ENCODE measurements at regions of chr1 and their contacts with region 1.

Region 1: GRCh38 chr1:112390775-112391602 is 5.0 kb upstream of the CTTNBP2NL start:
- DNase-seq: peak; percentile 76 to 97 (median 88)

Region 2: DNA sequence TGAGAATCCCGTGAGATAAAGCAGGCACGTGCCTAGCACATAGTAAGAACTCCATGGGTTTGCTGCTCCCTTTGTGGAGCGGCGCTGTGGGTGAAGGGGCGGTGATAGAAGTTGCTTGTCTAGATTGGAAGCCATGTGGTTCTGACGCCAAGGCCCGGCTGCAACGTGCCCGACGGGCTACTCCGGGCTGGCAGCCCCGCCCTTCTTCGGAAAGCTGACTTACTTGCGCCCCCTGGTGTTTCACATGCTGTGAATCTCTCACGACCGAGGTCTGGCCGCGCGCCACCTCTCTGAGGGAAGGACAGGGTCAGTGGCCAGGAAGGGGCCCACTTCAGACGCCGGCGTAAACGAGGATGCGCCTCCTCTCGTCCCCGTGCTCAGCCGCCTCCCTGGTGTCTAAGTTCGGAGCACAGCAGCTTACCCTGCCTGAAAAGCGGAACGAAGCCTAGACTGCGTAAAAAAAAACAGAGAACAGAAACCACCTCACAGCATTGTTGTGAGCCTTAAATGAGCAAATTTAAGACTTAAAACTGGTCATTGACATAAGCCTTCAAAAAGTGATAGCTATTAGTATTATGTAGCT is 75.2 kb after region 1 on chr1:
- intact Hi-C with region 1: loop called (anchors 1 kb)
- DNase-seq: peak; percentile 88 to 99 (median 96)

Region 3: GRCh38 chr1:112666946-112667345 is 276.0 kb after region 1 on chr1:
- intact Hi-C with region 1: no loop called
- DNase-seq: no peak

Region 4: DNA sequence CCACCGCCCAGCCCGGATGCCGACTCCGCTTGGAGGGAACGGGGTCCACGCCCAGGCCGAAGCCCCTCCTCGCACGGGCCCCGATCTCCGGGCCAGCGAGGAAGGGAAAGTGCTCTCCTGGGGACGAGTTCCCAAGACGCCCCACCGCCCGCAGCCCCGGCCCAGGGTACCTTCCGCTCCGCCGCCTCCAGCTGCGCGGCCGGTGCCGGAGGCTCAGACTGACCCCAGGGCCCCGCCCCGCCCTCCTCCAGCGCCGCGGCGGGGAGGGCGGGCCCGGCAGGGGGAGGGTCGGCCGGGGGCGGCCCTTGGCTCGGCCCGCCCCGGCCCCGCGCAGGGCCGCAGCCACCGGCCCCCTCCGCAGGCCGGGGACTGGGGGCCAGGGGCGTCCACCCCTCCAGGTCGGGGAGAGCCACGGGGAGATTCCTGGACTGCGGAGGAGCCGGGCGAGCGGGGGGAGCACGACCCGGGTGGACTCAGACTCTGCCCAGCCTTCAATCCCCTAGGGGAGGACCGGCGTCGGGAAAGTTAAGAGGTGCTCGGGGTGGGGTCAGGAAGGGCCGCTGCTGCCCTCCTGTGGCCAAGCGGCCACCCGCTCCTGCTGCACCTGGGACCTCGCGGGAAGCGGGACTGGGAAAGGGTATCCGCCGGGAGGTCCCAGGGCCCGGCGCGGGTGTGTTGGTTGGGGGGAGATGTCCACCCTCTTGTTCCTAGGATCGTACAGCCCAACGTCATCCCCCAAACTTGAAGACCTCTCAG is 316.1 kb after region 1 on chr1 and contains the start of gene RHOC:
- intact Hi-C with region 1: loop called (anchors 1 kb)
- DNase-seq: peak; percentile 52 to 97 (median 76)

Measured in posterior cingulate gyrus (tissue), 11 donors.